ENCODE measurements at regions of chr2 and their contacts with region 1.

Region 1: GRCh38 chr2:68441179-68441993 is 25.7 kb downstream of the FBXO48 start:
- DNase-seq: peak; percentile 76
- H3K4me3 Mint-ChIP-seq: peak overlapping the region; percentile 55
- H3K27ac Mint-ChIP-seq: peak overlapping the region; percentile 88
- H3K4me1 Mint-ChIP-seq: peaks cover 31% of the 10 kb centered on the region
- H3K27me3 Mint-ChIP-seq: peaks cover 10% of the 10 kb centered on the region

Region 2: GRCh38 chr2:68121873-68122679 is 319.3 kb before region 1 on chr2:
- intact Hi-C with region 1: loop called (anchors 1 kb)
- DNase-seq: peak; percentile 50
- H3K4me3 Mint-ChIP-seq: no peak overlapping the region
- H3K27ac Mint-ChIP-seq: no peak overlapping the region
- H3K4me1 Mint-ChIP-seq: peaks cover 5% of the 10 kb centered on the region
- H3K27me3 Mint-ChIP-seq: peaks cover under 1% of the 10 kb centered on the region

Region 3: DNA sequence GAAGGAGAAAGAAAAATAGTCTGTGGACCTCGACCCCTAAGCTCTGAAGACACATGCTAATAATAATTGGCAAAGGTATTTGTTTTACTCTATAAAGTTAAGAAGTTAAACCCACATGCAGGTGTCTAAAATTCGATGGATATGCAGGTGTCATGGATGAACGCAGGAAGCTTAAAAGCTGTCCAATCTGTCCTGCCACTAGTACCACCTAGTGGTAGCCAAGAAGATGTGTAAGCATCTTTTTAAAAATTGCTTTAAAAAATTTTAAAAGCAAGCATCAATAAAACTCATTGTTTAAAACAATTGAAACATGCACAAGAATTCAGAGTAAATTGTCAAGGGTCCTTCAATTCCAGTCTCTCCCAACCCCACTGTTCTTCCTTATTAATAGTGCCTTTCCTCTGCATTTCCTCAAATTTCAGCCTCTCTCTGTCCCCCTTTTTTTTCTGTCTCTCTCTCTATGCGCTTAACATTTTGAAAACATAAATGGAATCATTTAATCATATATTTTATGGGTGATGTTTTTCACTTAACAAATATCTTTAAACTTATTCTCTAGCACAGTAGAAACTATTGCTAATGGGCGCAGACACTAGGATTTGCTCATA is 158.5 kb before region 1 on chr2:
- intact Hi-C with region 1: loop called (anchors 1 kb)
- DNase-seq: no peak
- H3K4me3 Mint-ChIP-seq: no peak overlapping the region
- H3K27ac Mint-ChIP-seq: no peak overlapping the region
- H3K4me1 Mint-ChIP-seq: no peaks in the 10 kb centered on the region
- H3K27me3 Mint-ChIP-seq: peaks cover 45% of the 10 kb centered on the region

Region 4: DNA sequence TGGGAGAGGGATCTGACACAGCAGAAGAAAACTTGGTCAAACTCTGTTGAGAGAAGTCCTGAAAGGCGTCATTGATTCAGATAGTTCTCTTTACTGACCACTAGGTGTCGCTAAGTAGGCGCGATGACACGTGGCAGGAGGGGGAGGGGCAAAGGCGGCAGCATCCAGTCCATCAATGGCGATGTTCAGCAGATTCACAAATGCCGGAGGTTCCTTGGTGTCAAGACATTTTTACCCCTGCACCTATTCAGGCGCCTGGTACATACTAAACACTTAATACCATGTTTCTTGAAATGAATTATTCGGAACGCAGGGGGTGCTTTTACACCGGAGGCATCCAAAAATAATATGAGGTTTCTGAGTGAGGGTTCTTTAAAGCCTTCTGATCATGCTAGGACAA is 79.3 kb before region 1 on chr2:
- intact Hi-C with region 1: loop called (anchors 1 kb)
- DNase-seq: peak; percentile 65
- H3K4me3 Mint-ChIP-seq: peak overlapping the region; percentile 32
- H3K27ac Mint-ChIP-seq: peak overlapping the region; percentile 36
- H3K4me1 Mint-ChIP-seq: peaks cover 26% of the 10 kb centered on the region
- H3K27me3 Mint-ChIP-seq: peaks cover 12% of the 10 kb centered on the region

Region 5: DNA sequence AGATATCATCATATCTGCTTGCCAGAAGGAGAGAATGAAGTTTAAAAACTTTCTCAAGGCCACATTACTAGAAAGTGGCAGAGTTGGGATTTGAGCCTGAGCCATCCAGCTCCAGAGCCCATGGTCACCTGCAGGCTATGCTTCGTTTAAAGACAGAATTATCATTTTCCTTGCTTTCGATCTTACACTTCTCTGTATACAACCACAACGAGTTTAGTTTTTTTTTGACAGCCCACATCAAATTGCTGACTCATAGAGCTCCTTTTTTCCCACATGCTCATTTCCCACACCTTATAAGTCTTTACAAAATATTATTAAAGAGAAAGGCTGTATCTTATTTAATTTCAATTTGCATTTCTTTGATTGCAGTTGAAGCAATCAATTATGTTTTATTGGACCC is 69.8 kb before region 1 on chr2:
- intact Hi-C with region 1: loop called (anchors 2 kb)
- DNase-seq: no peak
- H3K4me3 Mint-ChIP-seq: peak overlapping the region; percentile 21
- H3K27ac Mint-ChIP-seq: peak overlapping the region; percentile 3
- H3K4me1 Mint-ChIP-seq: peaks cover 17% of the 10 kb centered on the region
- H3K27me3 Mint-ChIP-seq: peaks cover 14% of the 10 kb centered on the region

Region 6: GRCh38 chr2:68379184-68379708 is 62.1 kb before region 1 on chr2:
- intact Hi-C with region 1: loop called (anchors 1 kb)
- DNase-seq: no peak
- H3K4me3 Mint-ChIP-seq: peak overlapping the region; percentile 51
- H3K27ac Mint-ChIP-seq: peak overlapping the region; percentile 76
- H3K4me1 Mint-ChIP-seq: peaks cover 28% of the 10 kb centered on the region
- H3K27me3 Mint-ChIP-seq: peaks cover 13% of the 10 kb centered on the region

Region 7: DNA sequence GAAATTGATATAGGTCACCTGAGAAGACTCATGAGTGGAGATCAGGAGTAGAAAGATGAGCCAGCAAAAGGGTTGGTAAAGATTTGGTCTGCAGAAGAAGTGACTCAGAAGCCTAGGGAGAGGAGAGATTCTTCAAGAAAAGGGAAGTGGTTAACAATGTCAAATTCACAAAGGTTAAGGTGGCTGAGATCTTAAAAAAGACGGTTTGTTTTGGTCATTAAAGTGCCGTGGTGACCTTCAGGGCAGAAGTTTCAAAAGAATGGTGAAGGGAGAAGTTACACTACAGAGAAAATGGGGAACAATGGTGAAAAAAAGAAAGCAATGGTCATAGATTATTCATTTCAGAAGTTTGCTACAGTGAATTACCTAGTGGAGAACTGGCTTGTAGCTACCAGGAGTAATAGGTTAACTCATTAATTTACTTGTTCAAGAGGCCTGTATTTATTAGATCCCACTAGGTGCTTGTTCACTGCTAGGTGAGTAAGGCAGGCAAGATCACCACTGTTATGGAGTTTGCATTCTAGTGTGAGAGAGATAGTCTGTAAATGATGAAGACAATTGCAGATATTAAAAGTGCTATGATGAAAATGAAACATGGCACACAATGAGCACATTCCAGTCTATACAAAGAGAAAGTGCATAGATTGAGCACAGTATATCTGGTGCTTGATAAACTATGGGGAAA is 17.3 kb before region 1 on chr2:
- intact Hi-C with region 1: loop called (anchors 1 kb)
- DNase-seq: no peak
- H3K4me3 Mint-ChIP-seq: no peak overlapping the region
- H3K27ac Mint-ChIP-seq: no peak overlapping the region
- H3K4me1 Mint-ChIP-seq: peaks cover 21% of the 10 kb centered on the region
- H3K27me3 Mint-ChIP-seq: peaks cover 4% of the 10 kb centered on the region